Posterior vena cava (tissue), 2 donors: ENCODE measurements at regions of chr18 and their contacts with region 1.

Region 1: GRCh38 chr18:62714671-62715435 is 488 bp upstream of the PHLPP1 start:
- DNase-seq: peak; percentile 100

Region 2: GRCh38 chr18:62982600-62983251 is 267.9 kb after region 1 on chr18:
- intact Hi-C with region 1: loop called (anchors 1 to 10 kb)
- DNase-seq: no peak